Left cardiac atrium (tissue), 4 donors: ENCODE measurements at regions of chr11 and their contacts with region 1.

Region 1: GRCh38 chr11:41461057-41461681 is 1.7 kb upstream of the LRRC4C start:
- DNase-seq: no peak
- ATAC-seq: no peak

Region 2: GRCh38 chr11:41508121-41508520 is 47.0 kb after region 1 on chr11:
- intact Hi-C with region 1: no loop called
- DNase-seq: no peak
- ATAC-seq: no peak

Region 3: GRCh38 chr11:42524534-42525227 is 1063.5 kb after region 1 on chr11:
- intact Hi-C with region 1: loop called in 1 of 2 experiments (anchors 5 kb)
- DNase-seq: peak; percentile 34
- ATAC-seq: peak; percentile 58 to 78

Region 4: GRCh38 chr11:43282607-43283440 is 1821.7 kb after region 1 on chr11:
- intact Hi-C with region 1: loop called in 1 of 2 experiments (anchors 5 kb)
- DNase-seq: peak; percentile 34
- ATAC-seq: peak; percentile 36 to 38